Panc1 (cell line): ENCODE measurements at regions of chr1 and their contacts with region 1.

Region 1: DNA sequence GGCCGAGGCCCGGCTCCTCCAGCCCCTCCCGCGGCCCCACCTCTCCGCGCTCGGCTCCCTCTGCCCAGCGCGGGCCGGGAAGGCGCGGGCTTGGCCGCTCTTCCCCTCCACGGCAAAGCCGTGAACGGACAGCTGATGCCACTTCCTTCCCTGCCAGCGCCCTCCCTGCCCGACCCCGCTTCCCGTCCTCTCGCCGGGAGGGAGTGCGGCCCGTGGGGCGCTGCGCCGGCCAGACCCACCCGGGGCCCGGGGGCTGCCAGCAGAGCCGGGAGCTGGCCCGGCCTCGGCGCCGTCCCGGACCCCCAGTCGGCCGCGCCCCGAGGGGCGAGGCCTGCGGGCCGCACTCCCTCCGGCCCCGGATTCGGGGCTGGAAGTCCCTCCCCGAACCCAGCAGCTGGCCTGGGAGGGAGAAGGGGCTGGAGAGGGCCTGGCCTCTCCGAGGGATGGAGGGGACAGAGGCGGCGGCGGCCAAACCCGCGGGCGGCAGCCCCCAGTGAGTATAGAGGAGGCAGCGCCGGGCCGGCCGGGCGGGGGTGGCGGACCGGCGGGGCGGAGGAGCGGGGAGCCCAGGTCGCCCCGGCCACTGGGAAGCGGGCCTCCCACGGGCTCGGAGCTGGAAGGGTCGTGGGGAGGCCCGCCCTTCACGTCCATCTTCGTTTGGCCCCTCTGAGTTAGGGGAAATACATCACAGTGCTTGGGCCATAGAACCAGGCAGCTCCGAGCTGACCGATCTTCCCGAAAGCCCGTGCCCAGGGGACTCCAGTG is at the start of gene KIAA1614:
- DNase-seq: no peak
- ATAC-seq: peak; percentile 69
- H3K4me3 ChIP-seq: peak within 1 kb of the TSS; percentile 47 to 56
- H3K27ac ChIP-seq: no peak within 1 kb of the TSS
- H3K4me1 ChIP-seq: peaks cover 3% of the 10 kb centered on the region; the same call in 1 of the 2 replicates
- H3K27me3 ChIP-seq: no peaks in the 10 kb centered on the region
- CTCF ChIP-seq: no peak
- total RNA-seq, gene KIAA1614: 0.80 TPM

Region 2: GRCh38 chr1:180502360-180503273 is 410.4 kb before region 1 on chr1 and contains the start of gene ACBD6:
- CTCF ChIA-PET with region 1: no interaction called
- POLR2A ChIA-PET with region 1: interaction called, 12 read pairs
- in situ Hi-C with region 1: no loop called
- intact Hi-C with region 1: no loop called
- DNase-seq: peak; percentile 52
- ATAC-seq: peak; percentile 94
- H3K4me3 ChIP-seq: peak within 1 kb of the TSS; percentile 96 to 99
- H3K27ac ChIP-seq: peak within 1 kb of the TSS; percentile 91
- H3K4me1 ChIP-seq: peaks cover 11% of the 10 kb centered on the region; the same call in 1 of the 2 replicates
- H3K27me3 ChIP-seq: no peaks in the 10 kb centered on the region
- CTCF ChIP-seq: no peak
- total RNA-seq, gene ACBD6: 48.5 TPM

Region 3: GRCh38 chr1:180923021-180923841 is 10.2 kb after region 1 on chr1:
- CTCF ChIA-PET with region 1: no interaction called
- POLR2A ChIA-PET with region 1: interaction called, 11 read pairs
- in situ Hi-C with region 1: no loop called
- intact Hi-C with region 1: no loop called
- DNase-seq: no peak
- ATAC-seq: no peak
- H3K4me3 ChIP-seq: no peak overlapping the region
- H3K27ac ChIP-seq: no peak overlapping the region
- H3K4me1 ChIP-seq: peaks cover 7% of the 10 kb centered on the region
- H3K27me3 ChIP-seq: no peaks in the 10 kb centered on the region
- CTCF ChIP-seq: no peak

Region 4: DNA sequence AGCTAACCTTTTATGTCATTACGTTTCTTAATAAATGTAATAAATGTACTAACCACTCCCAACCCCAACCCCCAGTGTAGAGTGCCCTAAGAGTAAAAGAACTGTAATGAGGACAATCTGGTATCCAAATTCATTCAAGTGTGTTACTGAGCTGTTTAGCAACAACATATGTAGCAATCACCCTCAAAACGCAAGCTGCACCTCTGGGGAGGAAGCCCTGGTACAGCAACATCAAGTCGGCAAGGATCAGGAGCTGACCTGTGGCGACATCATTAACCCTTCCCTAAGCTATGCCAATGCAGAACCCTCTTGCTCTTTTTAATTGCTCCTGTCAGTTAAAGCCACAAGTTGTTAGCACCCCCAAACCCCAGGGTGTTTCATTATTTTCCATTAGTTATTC is 62.6 kb after region 1 on chr1:
- CTCF ChIA-PET with region 1: no interaction called
- POLR2A ChIA-PET with region 1: interaction called, 18 read pairs
- in situ Hi-C with region 1: no loop called
- intact Hi-C with region 1: no loop called
- DNase-seq: no peak
- ATAC-seq: no peak
- H3K4me3 ChIP-seq: no peak overlapping the region
- H3K27ac ChIP-seq: no peak overlapping the region
- H3K4me1 ChIP-seq: no peaks in the 10 kb centered on the region
- H3K27me3 ChIP-seq: no peaks in the 10 kb centered on the region
- CTCF ChIP-seq: no peak